ENCODE measurements at regions of chr10 and their contacts with region 1.

Region 1: DNA sequence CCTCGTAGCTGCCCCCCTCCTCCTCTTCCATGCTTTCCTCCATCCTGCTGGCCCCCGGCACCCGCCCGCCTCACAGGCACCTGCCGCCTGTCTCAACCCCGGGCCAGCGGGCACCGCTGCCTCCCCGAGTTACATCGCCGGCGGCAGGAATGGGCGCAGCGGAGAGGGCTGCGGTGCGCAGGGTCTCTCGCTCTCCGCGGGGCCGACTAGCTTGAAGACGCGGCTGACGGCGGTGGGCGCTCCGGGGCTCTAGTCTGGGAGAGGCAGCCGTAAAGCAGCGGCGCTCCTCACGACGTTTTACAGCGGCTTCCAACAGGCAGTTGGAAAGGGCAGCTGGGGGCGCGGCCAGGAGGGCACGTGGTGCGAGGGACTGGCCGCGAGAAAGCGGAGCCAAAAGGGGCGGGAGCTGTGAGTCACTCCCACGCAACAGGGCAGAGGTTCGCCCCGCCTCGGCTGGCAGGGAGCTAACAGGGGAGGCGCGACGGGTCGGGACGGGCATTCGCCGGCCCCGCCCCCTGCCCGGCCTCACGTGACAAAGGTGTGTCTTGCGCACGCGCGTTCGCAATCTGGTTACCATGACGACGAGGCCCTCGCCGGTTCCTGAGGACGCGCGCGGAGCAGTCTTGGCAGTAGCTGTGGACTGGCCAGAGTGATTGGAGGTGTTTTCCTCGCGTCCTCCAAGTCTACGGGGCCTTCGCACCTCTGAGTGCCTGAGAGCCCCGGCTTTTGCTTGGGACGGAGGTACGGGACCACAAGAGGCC is at the start of gene CACUL1:
- DNase-seq: peak; percentile 100
- H3K4me3 ChIP-seq: peak within 1 kb of the TSS; percentile 64 to 74
- H3K4me3 Mint-ChIP-seq: peak within 1 kb of the TSS; percentile 92 to 96 (median 94)
- H3K27ac ChIP-seq: peak within 1 kb of the TSS; percentile 87
- H3K27ac Mint-ChIP-seq: peak within 1 kb of the TSS; percentile 90 to 97 (median 96)
- H3K4me1 ChIP-seq: peaks cover 43% of the 10 kb centered on the region
- H3K4me1 Mint-ChIP-seq: peaks cover 22 to 49% (median 34%) of the 10 kb centered on the region in 4 donors
- H3K27me3 ChIP-seq: no peaks in the 10 kb centered on the region
- H3K27me3 Mint-ChIP-seq: peaks cover 0 to 9% of the 10 kb centered on the region in 2 donors
- total RNA-seq, gene CACUL1: 32.1 to 32.3 TPM

Region 2: DNA sequence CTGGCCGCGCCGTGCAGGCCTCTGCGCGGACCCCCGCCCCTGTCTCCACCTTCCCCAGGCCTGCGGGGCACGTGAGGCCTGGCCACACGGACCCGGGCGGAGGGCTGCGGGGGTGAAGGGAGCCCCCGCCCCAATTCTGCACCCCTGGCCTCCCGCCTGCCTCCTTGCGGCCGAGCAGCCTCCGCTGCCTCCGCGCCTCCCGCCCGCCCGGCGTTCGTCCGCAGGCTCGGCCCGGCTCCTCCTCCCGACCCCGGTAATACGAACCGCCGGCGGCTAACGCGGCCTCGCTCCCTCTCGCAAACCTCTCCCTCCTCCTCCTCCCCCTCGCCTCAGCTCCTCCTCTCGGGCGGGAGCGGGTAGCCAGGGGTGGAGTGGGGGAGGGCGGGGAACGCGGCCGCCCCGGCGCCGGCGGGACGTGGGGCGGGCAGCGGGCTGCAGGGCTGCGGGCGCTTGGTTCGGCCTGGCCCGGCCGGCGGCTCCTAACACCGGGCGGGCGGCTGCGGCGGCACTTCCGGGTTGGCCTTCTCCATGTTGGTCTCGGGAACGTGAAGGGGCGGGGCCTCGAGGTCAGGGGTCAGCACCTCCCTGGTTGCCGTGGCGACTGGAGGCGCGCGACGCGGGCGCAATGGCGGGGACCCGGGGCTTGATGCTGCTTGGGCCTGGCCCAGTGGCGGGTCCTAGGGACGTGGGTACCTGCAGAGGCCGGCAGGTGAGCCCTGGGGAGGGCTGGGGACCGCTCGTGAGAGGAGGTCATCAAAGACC is 708.3 kb before region 1 on chr10 and contains the start of gene RAB11FIP2:
- CTCF ChIA-PET with region 1: no interaction called
- POLR2A ChIA-PET with region 1: no interaction called
- intact Hi-C with region 1: loop called (anchors 10 kb)
- DNase-seq: peak; percentile 94 to 97 (median 95)
- H3K4me3 ChIP-seq: peak within 1 kb of the TSS; percentile 48 to 74
- H3K4me3 Mint-ChIP-seq: peak within 1 kb of the TSS; percentile 88 to 94 (median 91)
- H3K27ac ChIP-seq: peak within 1 kb of the TSS; percentile 79
- H3K27ac Mint-ChIP-seq: peak within 1 kb of the TSS; percentile 82 to 94 (median 91)
- H3K4me1 ChIP-seq: peaks cover 50% of the 10 kb centered on the region
- H3K4me1 Mint-ChIP-seq: peaks cover 26 to 52% (median 34%) of the 10 kb centered on the region in 4 donors
- H3K27me3 ChIP-seq: no peaks in the 10 kb centered on the region
- H3K27me3 Mint-ChIP-seq: no peaks in the 10 kb centered on the region
- total RNA-seq, gene RAB11FIP2: 20.0 to 23.5 TPM

Region 3: GRCh38 chr10:118568327-118568848 is 186.5 kb before region 1 on chr10:
- CTCF ChIA-PET with region 1: interaction called, 17 read pairs
- POLR2A ChIA-PET with region 1: no interaction called
- intact Hi-C with region 1: no loop called
- DNase-seq: peak; percentile 43 to 69 (median 65)
- H3K4me3 ChIP-seq: no peak overlapping the region
- H3K4me3 Mint-ChIP-seq: peak overlapping the region in 2 of 8 donors; percentile 38 to 54
- H3K27ac ChIP-seq: no peak overlapping the region
- H3K27ac Mint-ChIP-seq: no peak overlapping the region
- H3K4me1 ChIP-seq: no peaks in the 10 kb centered on the region
- H3K4me1 Mint-ChIP-seq: peaks cover 0 to 7% (median 1%) of the 10 kb centered on the region in 4 donors
- H3K27me3 ChIP-seq: no peaks in the 10 kb centered on the region
- H3K27me3 Mint-ChIP-seq: peaks cover 1% of the 10 kb centered on the region in 2 donors

Region 4: GRCh38 chr10:118662228-118663035 is 92.5 kb before region 1 on chr10:
- CTCF ChIA-PET with region 1: no interaction called
- POLR2A ChIA-PET with region 1: no interaction called
- intact Hi-C with region 1: no loop called
- DNase-seq: peak; percentile 30 to 60 (median 40)
- H3K4me3 ChIP-seq: no peak overlapping the region
- H3K4me3 Mint-ChIP-seq: peak overlapping the region; percentile 1 to 91 (median 64)
- H3K27ac ChIP-seq: no peak overlapping the region
- H3K27ac Mint-ChIP-seq: peak overlapping the region; percentile 30 to 80 (median 72)
- H3K4me1 ChIP-seq: peaks cover 60% of the 10 kb centered on the region
- H3K4me1 Mint-ChIP-seq: peaks cover 50 to 78% (median 69%) of the 10 kb centered on the region in 4 donors
- H3K27me3 ChIP-seq: no peaks in the 10 kb centered on the region
- H3K27me3 Mint-ChIP-seq: no peaks in the 10 kb centered on the region

Region 5: GRCh38 chr10:118732245-118733165 is 22.4 kb before region 1 on chr10:
- CTCF ChIA-PET with region 1: interaction called, 16 read pairs
- POLR2A ChIA-PET with region 1: interaction called, 39 read pairs
- intact Hi-C with region 1: loop called (anchors 2 kb)
- DNase-seq: peak in 4 of 5 donors; percentile 36 to 49 (median 38)
- H3K4me3 ChIP-seq: no peak overlapping the region
- H3K4me3 Mint-ChIP-seq: peak overlapping the region; percentile 50 to 85 (median 74)
- H3K27ac ChIP-seq: peak overlapping the region; percentile 12
- H3K27ac Mint-ChIP-seq: peak overlapping the region; percentile 75 to 88 (median 80)
- H3K4me1 ChIP-seq: peaks cover 77% of the 10 kb centered on the region
- H3K4me1 Mint-ChIP-seq: peaks cover 63 to 90% (median 74%) of the 10 kb centered on the region in 4 donors
- H3K27me3 ChIP-seq: no peaks in the 10 kb centered on the region
- H3K27me3 Mint-ChIP-seq: no peaks in the 10 kb centered on the region

Region 6: DNA sequence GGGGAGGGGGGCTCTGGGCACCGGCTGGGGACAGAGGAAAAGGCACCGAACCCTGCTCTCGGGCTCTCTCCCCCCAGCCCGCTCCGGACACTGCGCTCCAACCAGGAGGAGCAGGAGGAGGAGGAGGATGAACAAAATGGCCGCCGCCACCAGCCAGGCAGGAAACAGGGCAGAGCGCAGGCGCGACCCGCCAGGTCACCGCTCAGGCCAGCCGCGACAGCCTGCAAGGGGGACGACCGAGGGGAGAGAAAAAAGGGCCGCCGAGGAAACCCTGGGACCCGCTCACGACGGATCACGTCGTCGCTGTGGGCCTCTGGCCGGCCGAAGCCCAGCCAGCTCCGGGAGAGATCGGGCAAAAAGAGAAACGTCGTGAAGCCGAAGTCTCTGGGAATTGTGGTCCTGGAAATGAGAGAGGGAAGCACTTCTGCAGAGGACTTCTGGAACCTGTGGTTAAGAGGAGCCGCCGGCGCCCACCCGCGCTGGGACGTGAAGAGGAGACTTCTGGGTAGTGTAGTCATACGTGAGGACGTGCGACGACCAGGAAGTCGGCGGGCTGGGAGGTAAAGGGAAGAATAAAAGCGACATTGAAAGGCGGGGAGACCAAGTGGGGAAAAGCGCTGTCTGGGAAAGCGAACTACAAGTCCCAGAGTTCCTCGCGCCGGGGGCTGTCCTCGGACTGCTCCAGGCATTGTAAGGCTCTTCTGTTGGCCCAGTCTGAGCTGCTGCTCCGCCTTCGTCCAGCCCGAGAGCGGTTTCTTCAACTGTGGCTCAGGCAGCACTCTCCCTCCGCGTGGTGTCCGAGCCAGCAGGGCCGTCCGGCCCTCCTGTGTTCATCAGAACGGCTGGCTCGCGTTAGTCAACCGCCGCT is 841.9 kb after region 1 on chr10 and contains the start of gene TIAL1:
- CTCF ChIA-PET with region 1: no interaction called
- POLR2A ChIA-PET with region 1: interaction called, 3 read pairs
- intact Hi-C with region 1: loop called (anchors 1 kb)
- DNase-seq: peak; percentile 89 to 97 (median 91)
- H3K4me3 ChIP-seq: peak within 1 kb of the TSS; percentile 83 to 99
- H3K4me3 Mint-ChIP-seq: peak within 1 kb of the TSS; percentile 93 to 100 (median 99)
- H3K27ac ChIP-seq: peak within 1 kb of the TSS; percentile 98
- H3K27ac Mint-ChIP-seq: peak within 1 kb of the TSS; percentile 97 to 100 (median 99)
- H3K4me1 ChIP-seq: peaks cover 43% of the 10 kb centered on the region
- H3K4me1 Mint-ChIP-seq: peaks cover 37 to 57% (median 44%) of the 10 kb centered on the region in 4 donors
- H3K27me3 ChIP-seq: no peaks in the 10 kb centered on the region
- H3K27me3 Mint-ChIP-seq: no peaks in the 10 kb centered on the region
- total RNA-seq, gene TIAL1: 201 to 212 TPM

Measured in CD4-positive, alpha-beta memory T cell (primary cell).